RWPE1 (cell line): ENCODE measurements at regions of chr7 and their contacts with region 1.

Region 1: GRCh38 chr7:44973610-44974401 is 5.0 kb downstream of the MYO1G start:
- DNase-seq: no peak
- H3K27ac ChIP-seq: peak overlapping the region; percentile 7; the same call in 1 of the 2 replicates
- CTCF ChIP-seq: no peak; the same call in 1 of the 2 replicates

Region 2: DNA sequence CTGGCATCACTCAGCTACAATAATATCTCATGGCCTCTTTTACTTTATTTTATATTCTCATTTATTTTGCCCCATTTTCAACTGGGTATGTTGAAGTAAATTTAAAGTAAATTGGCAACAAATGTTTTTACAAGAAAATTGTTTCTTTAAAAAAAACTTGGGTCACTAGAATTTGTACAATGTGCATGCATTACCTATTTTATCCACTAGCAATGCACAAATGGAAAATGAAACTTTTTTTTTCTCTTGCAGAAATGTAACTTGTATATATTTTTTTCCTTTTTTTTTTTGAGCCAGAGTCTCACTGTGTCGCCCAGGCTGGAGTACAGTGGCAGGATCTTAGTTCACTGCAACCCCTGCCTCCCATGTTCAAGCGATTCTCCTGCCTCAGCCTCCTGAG is 115.6 kb before region 1 on chr7:
- CTCF ChIA-PET with region 1: interaction called, 11 read pairs
- POLR2A ChIA-PET with region 1: no interaction called
- DNase-seq: no peak
- H3K27ac ChIP-seq: no peak overlapping the region
- CTCF ChIP-seq: peak; percentile 37